GM12878 (cell line): ENCODE measurements at regions of chr12 and their contacts with region 1.

Region 1: DNA sequence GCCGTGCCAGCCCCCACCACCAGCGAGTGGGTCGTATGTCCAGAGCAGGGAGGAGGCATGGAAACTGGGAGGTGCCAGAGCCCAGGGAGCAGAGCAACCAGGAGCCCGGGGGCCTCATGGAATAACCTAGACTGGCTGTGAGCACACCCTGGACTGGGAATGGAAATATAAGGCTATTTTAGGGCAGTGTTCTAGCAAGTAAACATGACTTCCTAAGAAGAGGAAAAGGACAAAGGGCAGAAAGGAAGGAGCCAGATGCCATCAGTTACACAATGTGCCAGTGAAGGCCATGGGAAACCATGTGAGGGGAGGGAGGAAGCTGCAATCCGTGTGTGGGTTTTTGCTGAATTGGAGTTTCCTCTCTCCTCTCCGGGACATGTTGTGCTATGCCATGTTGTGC is 18.7 kb upstream of the CPM start:
- DNase-seq: no peak
- ATAC-seq: no peak
- H3K4me3 ChIP-seq: no peak overlapping the region
- H3K27ac ChIP-seq: no peak overlapping the region
- H3K4me1 ChIP-seq: no peaks in the 10 kb centered on the region
- H3K27me3 ChIP-seq: no peaks in the 10 kb centered on the region; a peak in 1 of 4 replicates
- CTCF ChIP-seq: no peak
- EP300 ChIP-seq: no peak
- POLR2A ChIP-seq: no peak
- RAD21 ChIP-seq: no peak

Region 2: GRCh38 chr12:68727776-68728175 is 223.9 kb before region 1 on chr12:
- CTCF ChIA-PET with region 1: no interaction called
- POLR2A ChIA-PET with region 1: no interaction called
- RAD21 ChIA-PET with region 1: no interaction called
- SMC1A ChIA-PET with region 1: no interaction called
- in situ Hi-C with region 1: no loop called
- intact Hi-C with region 1: no loop called
- DNase-seq: no peak
- ATAC-seq: no peak
- H3K4me3 ChIP-seq: no peak overlapping the region
- H3K27ac ChIP-seq: no peak overlapping the region
- H3K4me1 ChIP-seq: no peaks in the 10 kb centered on the region
- H3K27me3 ChIP-seq: no peaks in the 10 kb centered on the region
- CTCF ChIP-seq: no peak
- EP300 ChIP-seq: no peak
- POLR2A ChIP-seq: no peak
- RAD21 ChIP-seq: no peak

Region 3: GRCh38 chr12:68889647-68890121 is 62.0 kb before region 1 on chr12:
- CTCF ChIA-PET with region 1: no interaction called
- POLR2A ChIA-PET with region 1: no interaction called
- RAD21 ChIA-PET with region 1: no interaction called
- SMC1A ChIA-PET with region 1: no interaction called
- in situ Hi-C with region 1: no loop called
- intact Hi-C with region 1: no loop called
- DNase-seq: no peak
- ATAC-seq: peak; percentile 26; the same call in 1 of the 3 replicates
- H3K4me3 ChIP-seq: no peak overlapping the region
- H3K27ac ChIP-seq: no peak overlapping the region
- H3K4me1 ChIP-seq: no peaks in the 10 kb centered on the region
- H3K27me3 ChIP-seq: no peaks in the 10 kb centered on the region
- CTCF ChIP-seq: no peak
- EP300 ChIP-seq: no peak
- POLR2A ChIP-seq: no peak
- RAD21 ChIP-seq: no peak

Region 4: GRCh38 chr12:68919581-68920239 is 31.9 kb before region 1 on chr12:
- CTCF ChIA-PET with region 1: no interaction called
- POLR2A ChIA-PET with region 1: interaction called, 11 read pairs
- RAD21 ChIA-PET with region 1: no interaction called
- SMC1A ChIA-PET with region 1: no interaction called
- in situ Hi-C with region 1: no loop called
- intact Hi-C with region 1: no loop called
- DNase-seq: no peak
- ATAC-seq: no peak
- H3K4me3 ChIP-seq: no peak overlapping the region
- H3K27ac ChIP-seq: no peak overlapping the region
- H3K4me1 ChIP-seq: no peaks in the 10 kb centered on the region
- H3K27me3 ChIP-seq: no peaks in the 10 kb centered on the region
- CTCF ChIP-seq: no peak
- EP300 ChIP-seq: no peak
- POLR2A ChIP-seq: no peak
- RAD21 ChIP-seq: no peak